BJ (cell line): ENCODE measurements at regions of chr14 and their contacts with region 1.

Region 1: DNA sequence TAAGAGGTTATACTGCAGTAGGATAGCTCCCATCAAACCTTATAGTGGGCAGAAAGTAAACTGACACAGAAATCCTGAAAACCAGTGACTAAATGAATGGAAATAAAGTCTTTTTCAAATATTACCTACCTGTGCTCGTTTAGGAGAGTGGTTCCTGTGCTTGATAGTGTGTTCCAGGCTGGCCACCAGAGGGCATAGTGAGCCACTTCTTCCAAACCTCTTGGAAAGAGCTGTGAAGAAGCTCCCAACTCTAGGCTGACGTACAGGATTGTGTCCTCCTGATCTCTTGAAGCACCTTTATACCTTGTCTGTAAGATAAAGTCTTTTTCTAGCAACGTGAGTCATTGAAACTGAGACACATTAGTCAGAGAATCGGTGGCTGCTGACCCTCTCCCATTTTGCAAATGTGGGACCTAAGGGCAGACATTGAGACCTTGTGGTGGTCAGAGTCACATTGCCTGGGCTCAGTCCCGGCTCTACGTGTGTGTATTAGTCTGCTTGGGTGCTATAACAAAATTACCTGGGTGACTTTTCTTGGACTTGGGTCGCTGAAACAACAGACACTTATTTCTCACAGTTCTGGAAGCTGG is 17.6 kb downstream of the TDP1 start:
- DNase-seq: no peak
- H3K4me3 ChIP-seq: no peak overlapping the region
- H3K27me3 ChIP-seq: no peaks in the 10 kb centered on the region
- CTCF ChIP-seq: peak; percentile 94

Region 2: GRCh38 chr14:89959853-89960445 is 13.4 kb before region 1 on chr14:
- CTCF ChIA-PET with region 1: interaction called, 23 read pairs
- POLR2A ChIA-PET with region 1: no interaction called
- DNase-seq: no peak
- H3K4me3 ChIP-seq: no peak overlapping the region
- H3K27me3 ChIP-seq: no peaks in the 10 kb centered on the region
- CTCF ChIP-seq: no peak

Region 3: GRCh38 chr14:89983375-89983774 is 10.0 kb after region 1 on chr14:
- CTCF ChIA-PET with region 1: interaction called, 35 read pairs
- POLR2A ChIA-PET with region 1: interaction called, 4 read pairs
- DNase-seq: no peak
- H3K4me3 ChIP-seq: no peak overlapping the region
- H3K27me3 ChIP-seq: no peaks in the 10 kb centered on the region
- CTCF ChIP-seq: no peak

Region 4: GRCh38 chr14:90109646-90110257 is 136.4 kb after region 1 on chr14:
- CTCF ChIA-PET with region 1: no interaction called
- POLR2A ChIA-PET with region 1: no interaction called
- DNase-seq: no peak
- H3K4me3 ChIP-seq: no peak overlapping the region
- H3K27me3 ChIP-seq: no peaks in the 10 kb centered on the region
- CTCF ChIP-seq: no peak